CD14-positive monocyte (primary cell): ENCODE measurements at regions of chr3 and their contacts with region 1.

Region 1: GRCh38 chr3:141561426-141562034 is 74.7 kb downstream of the RASA2 start:
- DNase-seq: peak; percentile 47 to 62 (median 57)
- H3K4me3 ChIP-seq: no peak overlapping the region
- H3K4me3 Mint-ChIP-seq: no peak overlapping the region
- H3K27ac ChIP-seq: no peak overlapping the region
- H3K27ac Mint-ChIP-seq: peak overlapping the region in 1 of 7 donors; percentile 36
- H3K4me1 ChIP-seq: peaks cover 5 to 12% of the 10 kb centered on the region in 2 donors
- H3K4me1 Mint-ChIP-seq: peaks cover 6% of the 10 kb centered on the region
- H3K27me3 ChIP-seq: no peaks in the 10 kb centered on the region
- H3K27me3 Mint-ChIP-seq: peaks cover 0 to 1% (median 0%) of the 10 kb centered on the region in 3 donors
- CTCF ChIP-seq: peak; percentile 98

Region 2: GRCh38 chr3:141460097-141460704 is 101.3 kb before region 1 on chr3:
- intact Hi-C with region 1: loop called (anchors 2 kb)
- DNase-seq: peak; percentile 67 to 75 (median 73)
- H3K4me3 ChIP-seq: no peak overlapping the region
- H3K4me3 Mint-ChIP-seq: no peak overlapping the region
- H3K27ac ChIP-seq: no peak overlapping the region
- H3K27ac Mint-ChIP-seq: peak overlapping the region in 1 of 7 donors; percentile 41
- H3K4me1 ChIP-seq: no peaks in the 10 kb centered on the region
- H3K4me1 Mint-ChIP-seq: peaks cover 6% of the 10 kb centered on the region
- H3K27me3 ChIP-seq: no peaks in the 10 kb centered on the region
- H3K27me3 Mint-ChIP-seq: peaks cover 0 to 2% (median 1%) of the 10 kb centered on the region in 3 donors
- CTCF ChIP-seq: peak; percentile 89

Region 3: GRCh38 chr3:141477224-141477623 is 84.3 kb before region 1 on chr3:
- intact Hi-C with region 1: loop called in 1 of 2 experiments (anchors 5 kb)
- DNase-seq: peak in 1 of 3 donors; percentile 42
- H3K4me3 ChIP-seq: no peak overlapping the region
- H3K4me3 Mint-ChIP-seq: no peak overlapping the region
- H3K27ac ChIP-seq: no peak overlapping the region
- H3K27ac Mint-ChIP-seq: peak overlapping the region in 1 of 7 donors; percentile 58
- H3K4me1 ChIP-seq: peaks cover 6% of the 10 kb centered on the region in 2 donors
- H3K4me1 Mint-ChIP-seq: peaks cover 16% of the 10 kb centered on the region
- H3K27me3 ChIP-seq: no peaks in the 10 kb centered on the region
- H3K27me3 Mint-ChIP-seq: peaks cover 0 to 7% (median 1%) of the 10 kb centered on the region in 3 donors
- CTCF ChIP-seq: no peak